HCT116 (cell line): ENCODE measurements at regions of chr1 and their contacts with region 1.

Region 1: GRCh38 chr1:168234846-168235547 is 9.2 kb downstream of the SFT2D2 start:
- DNase-seq: peak; percentile 31
- ATAC-seq: peak; percentile 99
- H3K4me3 ChIP-seq: no peak overlapping the region
- H3K27ac ChIP-seq: no peak overlapping the region
- H3K4me1 ChIP-seq: 0 out of 4 replicates have a peak, but pooled peaks cover 0 to 6% of the 10 kb centered on the region in 2 experiments
- H3K27me3 ChIP-seq: no peaks in the 10 kb centered on the region
- CTCF ChIP-seq: peak; percentile 57 to 86 (median 84); a peak in 5 of 6 replicates
- POLR2A ChIP-seq: no peak
- RAD21 ChIP-seq: peak; percentile 73

Region 2: DNA sequence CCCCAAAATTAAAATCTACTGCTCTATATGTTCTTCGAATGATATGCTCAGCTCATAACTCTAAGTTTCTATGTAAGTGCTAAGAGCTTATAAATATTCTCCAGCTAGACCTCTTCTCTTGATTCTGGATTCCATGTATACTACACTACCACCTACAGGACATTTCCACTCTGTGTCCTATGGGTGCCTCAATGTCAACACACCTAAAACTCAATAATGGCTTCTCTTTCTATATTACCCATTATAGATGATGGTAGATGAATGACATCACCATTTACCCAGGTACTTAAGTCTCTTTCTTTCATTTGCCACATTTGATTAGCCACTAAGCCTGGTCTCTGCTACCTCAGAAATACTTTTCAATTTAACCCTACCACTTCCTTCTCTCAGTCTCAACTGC is 86.9 kb after region 1 on chr1:
- CTCF ChIA-PET with region 1: interaction called, 17 read pairs
- POLR2A ChIA-PET with region 1: no interaction called
- RAD21 ChIA-PET with region 1: interaction called, 6 to 13 read pairs
- intact Hi-C with region 1: loop called (anchors 2 kb)
- DNase-seq: peak; percentile 27
- ATAC-seq: peak; percentile 75
- H3K4me3 ChIP-seq: no peak overlapping the region
- H3K27ac ChIP-seq: no peak overlapping the region
- H3K4me1 ChIP-seq: peaks cover 13 to 28% of the 10 kb centered on the region in 2 experiments
- H3K27me3 ChIP-seq: no peaks in the 10 kb centered on the region
- CTCF ChIP-seq: peak; percentile 40 to 65 (median 58); a peak in 5 of 6 replicates
- POLR2A ChIP-seq: no peak
- RAD21 ChIP-seq: peak; percentile 73

Region 3: GRCh38 chr1:168335500-168335899 is 100.5 kb after region 1 on chr1:
- CTCF ChIA-PET with region 1: no interaction called
- POLR2A ChIA-PET with region 1: no interaction called
- RAD21 ChIA-PET with region 1: no interaction called
- intact Hi-C with region 1: no loop called
- DNase-seq: no peak
- ATAC-seq: no peak
- H3K4me3 ChIP-seq: no peak overlapping the region
- H3K27ac ChIP-seq: no peak overlapping the region
- H3K4me1 ChIP-seq: no peaks in the 10 kb centered on the region
- H3K27me3 ChIP-seq: no peaks in the 10 kb centered on the region
- CTCF ChIP-seq: no peak
- POLR2A ChIP-seq: no peak
- RAD21 ChIP-seq: no peak